ENCODE measurements at regions of chr10 and their contacts with region 1.

Region 1: GRCh38 chr10:100923580-100923979 is 10.8 kb downstream of the SLF2 start:
- DNase-seq: no peak
- H3K4me3 ChIP-seq: no peak overlapping the region
- H3K27me3 ChIP-seq: no peaks in the 10 kb centered on the region
- CTCF ChIP-seq: no peak

Region 2: DNA sequence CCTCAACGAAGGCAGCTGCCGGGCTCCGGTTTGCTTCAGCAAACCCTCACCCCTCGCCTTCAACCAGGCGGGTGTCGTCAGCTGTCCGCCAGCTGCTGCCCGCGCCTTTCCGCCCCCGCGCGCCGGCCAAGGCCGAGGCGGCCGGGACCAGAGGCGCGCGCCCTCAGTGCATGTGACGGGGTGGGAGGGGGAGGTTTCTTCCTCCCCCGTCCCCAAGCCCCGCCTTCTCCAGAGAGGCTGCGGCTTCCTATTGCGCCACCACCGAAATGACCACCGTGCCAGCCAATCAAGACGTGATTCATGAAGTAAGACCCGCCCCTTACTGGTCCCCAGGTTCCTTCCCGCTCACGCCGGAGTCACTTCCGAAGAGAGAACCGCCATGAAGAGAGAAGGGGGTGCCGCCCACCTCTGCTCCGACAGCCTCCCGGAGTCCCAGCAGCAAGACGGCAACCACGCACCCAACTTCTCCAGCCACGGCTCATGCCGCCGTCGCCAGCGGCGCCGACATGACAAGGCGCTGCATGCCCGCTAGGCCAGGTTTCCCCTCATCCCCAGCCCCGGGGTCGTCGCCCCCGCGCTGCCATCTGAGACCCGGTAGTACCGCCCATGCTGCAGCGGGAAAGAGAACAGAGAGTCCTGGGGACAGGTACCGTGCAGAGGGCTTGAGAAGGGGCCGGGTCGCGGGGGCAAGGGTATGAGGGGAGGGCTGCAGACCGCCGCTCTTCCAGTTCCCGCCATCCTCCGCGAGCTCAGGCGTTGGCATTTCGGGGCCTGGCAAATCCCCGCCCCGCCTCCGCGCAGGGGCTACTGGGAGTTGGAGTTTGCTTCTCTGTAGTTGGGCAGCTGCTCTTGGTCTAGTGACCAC is 10.7 kb before region 1 on chr10 and contains the start of gene SLF2:
- CTCF ChIA-PET with region 1: no interaction called
- POLR2A ChIA-PET with region 1: interaction called, 10 read pairs
- DNase-seq: peak; percentile 92
- H3K4me3 ChIP-seq: peak within 1 kb of the TSS; percentile 79
- H3K27me3 ChIP-seq: no peaks in the 10 kb centered on the region
- CTCF ChIP-seq: no peak
- polyA plus RNA-seq, gene SLF2: 6.8 and 10.1 TPM in 2 replicates